Testis (tissue), 5 donors: ENCODE measurements at regions of chr1 and their contacts with region 1.

Region 1: GRCh38 chr1:224519874-224520273 is 85.3 kb upstream of the WDR26 start:
- DNase-seq: no peak
- H3K4me3 ChIP-seq: no peak overlapping the region
- H3K27ac ChIP-seq: no peak overlapping the region
- H3K4me1 ChIP-seq: no peaks in the 10 kb centered on the region
- H3K27me3 ChIP-seq: no peaks in the 10 kb centered on the region
- CTCF ChIP-seq: no peak
- POLR2A ChIP-seq: no peak

Region 2: GRCh38 chr1:224149713-224150112 is 370.2 kb before region 1 on chr1:
- intact Hi-C with region 1: no loop called
- DNase-seq: no peak
- H3K4me3 ChIP-seq: no peak overlapping the region
- H3K27ac ChIP-seq: no peak overlapping the region
- H3K4me1 ChIP-seq: no peaks in the 10 kb centered on the region
- H3K27me3 ChIP-seq: no peaks in the 10 kb centered on the region
- CTCF ChIP-seq: no peak
- POLR2A ChIP-seq: no peak

Region 3: GRCh38 chr1:224846119-224846907 is 326.4 kb after region 1 on chr1:
- intact Hi-C with region 1: loop called (anchors 5 kb)
- DNase-seq: no peak
- H3K4me3 ChIP-seq: no peak overlapping the region
- H3K27ac ChIP-seq: no peak overlapping the region
- H3K4me1 ChIP-seq: no peaks in the 10 kb centered on the region
- H3K27me3 ChIP-seq: no peaks in the 10 kb centered on the region
- CTCF ChIP-seq: no peak
- POLR2A ChIP-seq: no peak